ENCODE measurements at regions of chr1 and their contacts with region 1.

Region 1: DNA sequence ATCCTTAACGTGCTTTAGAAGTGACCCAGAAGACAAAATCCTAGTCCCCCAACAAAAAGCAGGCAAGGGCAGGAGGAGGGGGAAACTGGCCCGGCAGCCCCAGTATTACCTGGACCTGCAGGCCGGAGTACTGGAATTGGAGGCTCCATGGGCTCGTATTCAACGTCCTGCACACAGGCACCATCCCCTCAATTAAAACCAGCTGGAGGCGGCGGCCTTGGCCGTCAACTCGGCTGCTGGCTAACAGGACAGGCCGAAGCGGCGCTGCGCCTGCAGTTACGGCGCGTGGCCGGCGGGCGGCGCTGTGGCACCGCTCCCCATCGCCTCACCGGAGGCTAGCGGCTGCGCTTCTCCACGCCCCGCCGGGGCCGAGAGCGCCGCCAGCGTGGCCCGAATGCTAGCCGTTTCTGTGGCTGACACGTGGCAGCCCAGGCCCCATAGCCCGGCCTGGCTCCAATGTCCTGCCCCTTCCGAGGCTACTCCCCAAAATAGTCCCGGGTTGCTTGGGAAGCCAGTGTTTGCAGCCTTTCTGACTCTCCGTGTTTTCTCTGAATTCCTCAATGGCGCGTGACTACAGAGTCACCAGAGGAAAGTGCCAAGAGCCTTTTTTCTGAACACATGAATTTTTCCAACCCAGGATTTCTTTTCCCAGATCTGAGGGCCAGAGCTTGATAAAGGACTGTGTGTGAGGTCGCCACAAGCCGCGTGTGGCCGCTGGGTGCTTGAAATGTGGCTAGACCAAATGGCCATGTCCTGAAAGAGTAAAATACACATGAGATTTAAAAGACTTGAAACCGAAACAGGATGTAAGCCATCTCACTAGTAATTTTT is 82.5 kb downstream of the HHIPL2 start:
- DNase-seq: peak; percentile 76 to 92 (median 84)
- H3K4me3 ChIP-seq: peak overlapping the region; percentile 31 to 81 (median 62)
- H3K27ac ChIP-seq: peak overlapping the region; percentile 13 to 93 (median 82)
- H3K27me3 ChIP-seq: peaks cover 0 to 3% (median 0%) of the 10 kb centered on the region in 45 donors
- CTCF ChIP-seq: peak; percentile 95 to 100 (median 100)

Region 2: DNA sequence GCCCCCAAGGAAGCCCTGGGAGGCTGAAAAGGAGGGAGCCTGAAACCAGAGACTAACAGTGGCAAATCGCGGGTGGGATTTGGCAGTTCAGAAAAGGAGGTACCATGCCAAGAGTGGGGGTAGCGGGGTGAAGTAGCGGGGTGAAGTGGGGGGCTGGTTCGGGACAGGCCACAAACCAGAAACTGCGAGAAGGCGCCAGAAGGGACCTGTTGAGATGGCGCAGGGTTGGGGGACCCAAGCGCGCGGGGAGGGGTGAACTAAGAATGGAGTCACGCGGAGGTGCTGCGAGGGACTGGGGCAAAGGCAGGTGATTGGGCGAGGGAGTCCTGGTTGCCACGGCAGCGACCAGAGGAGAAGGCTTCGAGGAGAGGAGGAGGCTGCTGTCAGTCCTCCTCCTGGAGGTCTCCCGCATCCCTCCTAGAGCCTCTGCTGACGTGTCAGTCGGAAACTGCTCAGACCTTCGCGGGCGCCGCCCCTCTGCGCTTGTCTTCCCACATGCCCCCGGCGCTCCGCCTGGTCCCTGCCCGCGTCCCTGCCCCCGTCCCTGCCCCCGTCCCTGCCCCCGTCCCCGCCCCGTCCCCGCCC is 152.0 kb after region 1 on chr1:
- intact Hi-C with region 1: loop called in 1 of 2 experiments (anchors 5 kb)
- DNase-seq: peak; percentile 73 to 95 (median 90)
- H3K4me3 ChIP-seq: peak overlapping the region; percentile 52 to 99 (median 76)
- H3K27ac ChIP-seq: peak overlapping the region in 53 of 59 donors; percentile 19 to 88 (median 75)
- H3K27me3 ChIP-seq: no peaks in the 10 kb centered on the region
- CTCF ChIP-seq: no peak

Region 3: GRCh38 chr1:222634180-222635013 is 169.0 kb after region 1 on chr1:
- intact Hi-C with region 1: loop called (anchors 1 to 5 kb)
- DNase-seq: peak in 3 of 10 donors; percentile 31 to 63 (median 59)
- H3K4me3 ChIP-seq: peak overlapping the region in 1 of 59 donors; percentile 2
- H3K27ac ChIP-seq: peak overlapping the region in 4 of 59 donors; percentile 9 to 39 (median 24)
- H3K27me3 ChIP-seq: no peaks in the 10 kb centered on the region
- CTCF ChIP-seq: peak; percentile 77 to 98 (median 90)

Region 4: DNA sequence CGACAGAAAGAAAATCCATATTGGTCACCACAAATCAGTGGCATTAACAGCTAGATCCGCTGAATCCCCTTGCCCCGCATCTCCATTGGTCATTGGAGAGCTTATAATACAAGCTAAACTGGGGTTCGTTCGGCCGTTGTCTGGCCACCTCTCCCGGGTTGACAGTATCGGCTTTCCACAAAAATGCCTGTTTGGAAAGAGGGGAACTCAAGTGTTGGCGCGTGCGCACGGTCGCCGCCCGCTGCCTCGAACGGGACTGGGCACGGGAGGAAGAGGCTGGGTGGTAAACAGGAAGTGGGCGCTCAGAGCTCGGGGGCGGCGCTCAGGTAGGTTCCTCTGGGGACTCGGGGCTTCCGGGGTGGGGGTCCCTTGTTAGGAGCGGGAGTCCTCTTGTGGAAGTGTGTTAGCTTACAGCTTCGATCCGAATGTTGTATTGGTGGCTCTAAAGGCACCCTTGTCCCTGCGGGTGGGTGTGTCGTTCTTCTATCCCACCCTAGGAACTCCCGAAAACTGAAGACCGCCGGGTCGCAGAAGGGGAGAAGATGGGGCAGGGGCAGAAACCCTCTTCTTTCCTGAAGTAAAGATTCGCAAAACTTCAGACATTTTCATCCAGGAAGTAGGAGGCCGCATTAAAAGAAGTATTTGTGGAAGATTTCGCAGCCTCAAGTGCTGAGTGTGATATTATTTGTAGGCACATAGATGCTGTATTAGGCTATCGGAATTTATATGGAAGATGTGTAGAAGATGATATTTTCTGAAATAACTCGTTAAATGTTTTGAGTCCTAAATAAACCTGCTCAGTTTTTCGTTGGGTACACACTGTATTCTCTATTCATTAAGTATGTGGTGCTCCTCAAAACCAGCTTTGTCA is 247.9 kb after region 1 on chr1:
- intact Hi-C with region 1: loop called (anchors 5 to 10 kb)
- DNase-seq: peak; percentile 84 to 94 (median 92)
- H3K4me3 ChIP-seq: peak overlapping the region; percentile 65 to 98 (median 91)
- H3K27ac ChIP-seq: peak overlapping the region; percentile 95 to 100 (median 99)
- H3K27me3 ChIP-seq: no peaks in the 10 kb centered on the region
- CTCF ChIP-seq: peak in 9 of 56 donors; percentile 16 to 27 (median 18)

Region 5: DNA sequence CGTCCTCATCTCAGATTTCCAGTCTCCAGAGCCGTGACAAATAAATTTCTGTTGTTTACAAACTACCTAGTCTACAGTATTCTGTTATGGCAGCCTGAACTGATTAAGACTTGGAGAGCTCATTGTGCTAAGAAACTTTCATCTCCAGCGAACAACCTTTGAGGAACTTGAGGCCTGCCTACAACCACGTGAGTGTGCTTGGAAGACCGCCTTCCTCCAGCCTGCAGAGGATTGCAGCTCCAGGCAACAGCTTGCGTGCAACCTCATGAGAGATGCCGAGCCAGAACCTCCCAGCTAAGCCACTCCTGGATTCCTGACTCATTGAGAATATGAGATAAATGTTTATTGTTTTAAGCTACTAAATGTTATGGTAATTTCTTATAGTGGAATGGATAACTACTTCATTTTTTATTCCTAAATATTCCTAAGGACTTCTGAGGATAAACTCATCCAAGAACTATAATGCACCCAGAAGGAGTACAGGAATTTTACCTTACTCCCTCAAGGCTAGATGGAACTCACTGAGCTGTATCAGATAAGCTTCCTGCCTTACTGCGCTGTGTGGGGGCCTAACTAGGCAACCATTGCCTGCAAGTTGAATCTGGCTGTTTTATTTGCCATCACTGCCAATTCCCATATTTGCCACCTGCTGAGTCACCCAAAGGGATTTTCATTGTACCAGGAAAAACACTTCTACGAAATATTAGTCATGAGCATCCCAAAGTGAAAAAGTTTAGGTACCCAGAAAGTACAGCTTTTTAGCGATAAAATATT is 289.1 kb after region 1 on chr1:
- intact Hi-C with region 1: no loop called
- DNase-seq: peak in 8 of 10 donors; percentile 37 to 57 (median 49)
- H3K4me3 ChIP-seq: no peak overlapping the region
- H3K27ac ChIP-seq: peak overlapping the region in 5 of 59 donors; percentile 17 to 41 (median 30)
- H3K27me3 ChIP-seq: peaks cover 0 to 38% (median 2%) of the 10 kb centered on the region in 45 donors
- CTCF ChIP-seq: no peak

Region 6: GRCh38 chr1:223081181-223081994 is 616.0 kb after region 1 on chr1:
- intact Hi-C with region 1: loop called in 1 of 2 experiments (anchors 10 kb)
- DNase-seq: peak; percentile 41 to 79 (median 65)
- H3K4me3 ChIP-seq: peak overlapping the region in 57 of 59 donors; percentile 19 to 68 (median 48)
- H3K27ac ChIP-seq: peak overlapping the region in 17 of 59 donors; percentile 1 to 64 (median 54)
- H3K27me3 ChIP-seq: peaks cover 0 to 51% (median 0%) of the 10 kb centered on the region in 45 donors
- CTCF ChIP-seq: peak; percentile 59 to 97 (median 89)

Region 7: DNA sequence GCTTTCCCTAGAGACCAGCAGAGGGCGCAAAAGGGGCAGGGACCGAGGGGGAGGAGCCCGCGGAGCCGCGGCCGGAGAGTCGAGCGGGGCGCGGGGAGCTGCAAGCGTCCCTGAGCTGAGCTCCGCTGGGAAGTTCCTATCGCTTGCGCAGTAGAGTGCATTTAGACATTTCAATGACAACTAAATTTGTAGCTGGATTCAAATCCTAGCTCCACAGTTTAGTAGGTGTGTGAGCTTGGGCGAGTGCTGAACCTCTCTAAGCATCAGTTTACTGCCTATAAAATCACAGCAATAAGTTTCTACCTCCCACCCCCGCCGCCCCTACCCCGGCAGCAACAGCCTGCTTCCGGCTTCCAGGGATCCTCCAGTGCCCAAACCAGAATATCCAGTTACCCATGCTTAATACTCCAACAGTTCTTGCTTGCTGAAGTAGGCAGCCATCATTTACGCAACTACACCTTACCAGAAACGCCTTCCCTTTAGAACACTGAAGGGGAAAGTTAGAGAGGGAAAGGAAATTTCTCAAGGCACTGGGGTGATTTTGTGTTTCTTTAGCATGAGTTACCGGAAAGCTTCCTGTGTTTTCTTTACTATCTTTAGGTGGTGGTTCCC is 668.5 kb after region 1 on chr1:
- intact Hi-C with region 1: loop called in 1 of 2 experiments (anchors 10 kb)
- DNase-seq: peak; percentile 59 to 85 (median 76)
- H3K4me3 ChIP-seq: peak overlapping the region; percentile 22 to 66 (median 49)
- H3K27ac ChIP-seq: peak overlapping the region in 10 of 59 donors; percentile 17 to 69 (median 32)
- H3K27me3 ChIP-seq: peaks cover 0 to 60% (median 3%) of the 10 kb centered on the region in 45 donors
- CTCF ChIP-seq: peak; percentile 13 to 99 (median 95)